Activated naive CD4-positive, alpha-beta T cell treated with anti-CD3 and anti-CD28 coated beads, Interleukin-2, amount 10 ng/mL, durations not matched to agents 7 days and 5 days (primary cell): ENCODE measurements at regions of chr13 and their contacts with region 1.

Region 1: DNA sequence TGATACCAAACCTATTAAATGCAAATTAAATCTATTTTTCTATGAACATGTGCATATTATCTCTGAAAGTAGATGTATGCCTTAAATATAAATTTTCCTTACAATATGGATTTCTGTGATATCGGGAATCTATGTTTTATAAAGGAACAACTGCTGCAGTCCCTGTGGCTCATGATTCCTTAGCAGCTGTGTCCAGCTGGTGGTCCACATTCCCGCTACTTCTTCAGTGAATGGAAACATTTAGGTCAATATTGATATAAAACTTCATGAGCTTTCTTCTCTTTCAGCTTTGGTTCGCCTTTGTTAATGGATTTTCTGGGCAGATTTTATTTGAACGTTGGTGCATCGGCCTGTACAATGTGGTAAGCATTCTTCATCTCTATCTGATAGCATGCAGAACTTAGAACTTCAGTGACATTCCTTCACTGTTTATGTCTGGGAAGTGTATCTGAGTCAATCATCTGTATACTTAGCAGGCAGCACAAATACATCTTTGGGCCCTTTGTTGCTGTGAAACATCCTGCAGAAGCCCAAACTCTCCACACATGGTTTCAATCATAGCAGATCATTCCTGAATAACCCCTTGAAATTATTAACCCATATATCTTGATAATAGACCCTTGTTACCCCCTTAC is 223.9 kb downstream of the SHISA2 start:
- DNase-seq: no peak
- H3K4me3 Mint-ChIP-seq: no peak overlapping the region
- H3K27ac Mint-ChIP-seq: no peak overlapping the region
- H3K4me1 Mint-ChIP-seq: peaks cover 2% of the 10 kb centered on the region
- H3K27me3 Mint-ChIP-seq: peaks cover 5% of the 10 kb centered on the region

Region 2: DNA sequence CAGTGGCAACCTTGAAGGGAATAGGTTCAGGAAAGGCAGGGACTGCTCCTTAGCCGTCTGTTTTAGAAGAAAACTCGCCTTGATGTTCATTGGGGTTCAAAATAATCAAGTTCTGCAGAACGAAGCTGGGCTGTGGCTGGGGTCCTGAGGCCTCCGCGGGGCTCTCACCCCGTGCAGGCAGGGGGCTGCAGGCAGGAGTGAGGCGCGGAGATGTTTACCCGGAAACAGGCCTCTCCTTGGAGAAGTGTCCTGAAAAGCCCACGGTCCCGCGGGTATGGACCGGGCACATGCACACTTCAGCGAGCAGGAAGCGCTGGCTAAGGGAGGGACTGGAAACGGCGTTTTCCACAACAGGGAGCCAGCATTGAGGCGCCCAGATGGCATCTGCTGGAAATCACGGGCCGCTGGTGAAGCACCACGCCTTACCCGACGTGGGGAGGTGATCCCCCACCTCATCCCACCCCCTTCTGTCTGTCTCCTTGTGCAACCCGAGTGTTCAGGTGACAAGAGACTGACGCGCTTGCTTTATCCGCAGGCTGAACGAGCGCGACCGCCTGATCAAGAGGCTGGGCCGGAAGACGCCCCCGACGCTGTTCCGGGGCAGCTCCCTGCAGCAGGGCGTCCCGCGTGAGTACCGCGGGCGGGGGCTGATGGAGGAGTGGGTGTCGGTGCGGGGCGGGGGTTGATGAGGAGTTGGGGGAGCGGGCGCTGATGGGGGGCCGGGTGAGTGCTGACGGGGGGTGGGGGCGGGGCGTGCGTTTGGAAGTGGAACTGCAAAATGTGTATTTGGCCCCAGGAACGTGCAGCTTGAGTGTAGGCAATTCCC is 184.3 kb after region 1 on chr13:
- CTCF ChIA-PET with region 1: no interaction called
- DNase-seq: peak; percentile 72
- H3K4me3 Mint-ChIP-seq: peak overlapping the region; percentile 73
- H3K27ac Mint-ChIP-seq: peak overlapping the region; percentile 75
- H3K4me1 Mint-ChIP-seq: peaks cover 24% of the 10 kb centered on the region
- H3K27me3 Mint-ChIP-seq: peaks cover 4% of the 10 kb centered on the region

Region 3: DNA sequence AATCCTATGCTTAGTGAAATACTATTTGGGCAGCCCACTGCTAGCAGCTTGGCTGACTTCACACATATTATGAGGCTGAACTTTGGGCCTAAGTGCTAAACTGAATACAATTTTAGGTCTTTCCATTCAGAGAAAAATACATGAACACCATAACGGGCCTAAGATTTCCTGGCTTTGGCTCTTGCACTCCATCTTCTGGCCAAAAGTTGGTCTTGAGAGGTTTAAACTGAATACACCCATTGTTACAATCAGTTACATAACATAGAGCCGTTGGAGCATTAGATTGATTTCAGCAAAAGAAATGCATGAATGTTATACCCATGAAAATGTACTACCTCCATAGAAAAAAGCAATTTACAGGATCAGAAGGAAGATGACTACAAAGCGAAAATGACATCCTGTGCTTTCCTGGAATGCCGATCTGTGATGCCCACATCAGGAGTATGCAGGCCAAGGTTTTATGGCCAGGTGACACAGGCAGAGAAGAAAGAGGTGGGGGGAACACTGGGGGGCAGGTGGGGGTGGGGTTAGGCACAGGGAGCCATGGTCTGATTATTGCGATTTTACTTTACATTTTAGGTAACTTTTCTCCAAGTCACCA is 235.0 kb after region 1 on chr13:
- CTCF ChIA-PET with region 1: interaction called, 29 read pairs
- DNase-seq: peak; percentile 68
- H3K4me3 Mint-ChIP-seq: no peak overlapping the region
- H3K27ac Mint-ChIP-seq: no peak overlapping the region
- H3K4me1 Mint-ChIP-seq: peaks cover 13% of the 10 kb centered on the region
- H3K27me3 Mint-ChIP-seq: peaks cover 15% of the 10 kb centered on the region

Region 4: GRCh38 chr13:26071691-26072090 is 243.7 kb after region 1 on chr13:
- CTCF ChIA-PET with region 1: interaction called, 13 read pairs
- DNase-seq: no peak
- H3K4me3 Mint-ChIP-seq: no peak overlapping the region
- H3K27ac Mint-ChIP-seq: no peak overlapping the region
- H3K4me1 Mint-ChIP-seq: peaks cover 5% of the 10 kb centered on the region
- H3K27me3 Mint-ChIP-seq: peaks cover 52% of the 10 kb centered on the region